Heart right ventricle (tissue), 16 donors: ENCODE measurements at regions of chr2 and their contacts with region 1.

Region 1: GRCh38 chr2:96138179-96139145 is at the start of gene ASTL:
- DNase-seq: peak in 1 of 2 donors; percentile 32
- ATAC-seq: peak in 7 of 8 donors; percentile 35 to 72 (median 62)
- H3K4me3 ChIP-seq: no peak within 1 kb of the TSS
- H3K27ac ChIP-seq: no peak within 1 kb of the TSS
- H3K4me1 ChIP-seq: peaks cover 0 to 8% (median 0%) of the 10 kb centered on the region in 9 donors
- H3K27me3 ChIP-seq: peaks cover 0 to 14% (median 0%) of the 10 kb centered on the region in 7 donors
- CTCF ChIP-seq: peak; percentile 11 to 63 (median 52)
- total RNA-seq, gene ASTL: not detected

Region 2: GRCh38 chr2:96072746-96073145 is 65.7 kb before region 1 on chr2:
- intact Hi-C with region 1: no loop called
- DNase-seq: no peak
- ATAC-seq: peak in 3 of 8 donors; percentile 12 to 34 (median 17)
- H3K4me3 ChIP-seq: no peak overlapping the region
- H3K27ac ChIP-seq: peak overlapping the region in 1 of 10 donors; percentile 56
- H3K4me1 ChIP-seq: peaks cover 0 to 21% (median 0%) of the 10 kb centered on the region in 9 donors
- H3K27me3 ChIP-seq: no peaks in the 10 kb centered on the region
- CTCF ChIP-seq: no peak

Region 3: DNA sequence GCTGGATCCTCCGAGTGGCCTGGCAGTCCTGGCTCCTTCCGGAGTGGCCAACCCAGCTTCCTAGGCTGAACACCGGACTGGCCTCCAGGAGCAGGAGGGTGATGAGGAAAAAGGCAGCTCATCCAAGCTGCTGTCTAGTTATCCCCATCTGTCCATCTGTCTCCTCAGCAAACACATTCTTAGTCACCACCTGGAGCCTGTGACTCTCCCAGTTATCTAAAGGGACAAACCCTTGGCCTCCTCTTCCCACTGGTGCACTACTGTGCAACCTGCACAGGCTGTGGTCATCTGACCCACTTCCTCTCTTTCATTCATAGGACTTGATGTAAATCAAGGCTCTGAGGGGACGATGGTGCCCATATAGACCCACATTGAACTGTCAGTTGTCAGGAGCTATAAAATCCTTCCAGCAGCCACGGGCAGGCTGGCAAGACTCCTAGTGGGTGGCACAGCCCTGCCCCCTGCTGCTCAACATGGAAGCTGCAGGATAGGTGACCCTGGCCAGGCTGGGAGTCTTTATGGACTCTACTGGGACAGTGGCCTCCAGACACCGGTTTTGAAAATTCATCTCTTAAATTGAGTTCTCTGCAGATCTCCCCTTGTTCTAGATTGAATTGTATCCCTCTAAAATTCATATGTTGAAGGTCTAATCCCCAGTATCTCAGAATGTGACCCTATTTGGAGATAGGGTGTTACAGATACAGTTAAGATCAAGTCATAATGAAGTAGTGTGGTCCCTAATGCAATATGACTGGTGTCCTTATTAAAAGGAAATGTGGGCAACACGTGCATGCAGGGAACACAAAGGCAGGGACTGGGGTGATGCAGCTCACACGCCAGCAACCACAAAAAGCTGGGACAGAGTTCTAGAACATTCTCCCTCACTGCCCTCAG is 36.0 kb after region 1 on chr2:
- intact Hi-C with region 1: loop called in 3 of 10 experiments (anchors 2 to 5 kb)
- DNase-seq: peak; percentile 63 to 75
- ATAC-seq: peak; percentile 74 to 89 (median 84)
- H3K4me3 ChIP-seq: no peak overlapping the region
- H3K27ac ChIP-seq: no peak overlapping the region
- H3K4me1 ChIP-seq: peaks cover 0 to 20% (median 0%) of the 10 kb centered on the region in 9 donors
- H3K27me3 ChIP-seq: no peaks in the 10 kb centered on the region
- CTCF ChIP-seq: peak; percentile 73 to 96 (median 92)

Region 4: DNA sequence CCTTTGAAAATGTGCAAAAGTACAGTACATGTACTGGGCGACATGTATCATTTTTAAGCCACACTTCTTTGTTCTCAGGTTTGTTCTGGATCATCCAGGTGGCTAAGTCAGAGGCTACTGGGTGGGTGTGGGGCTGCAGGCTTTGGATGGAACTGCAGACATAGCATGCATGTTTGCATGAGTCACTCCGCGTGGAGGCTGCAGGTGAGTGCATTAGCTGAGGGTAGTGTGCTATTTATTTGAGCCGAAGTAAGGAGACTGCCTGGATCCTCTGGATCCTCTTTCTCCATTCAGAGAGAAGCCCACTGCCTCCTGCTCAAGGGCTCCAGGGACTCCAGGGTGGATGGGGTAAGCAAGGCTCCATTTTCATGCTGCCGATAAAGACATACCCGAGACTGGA is 376.1 kb after region 1 on chr2:
- intact Hi-C with region 1: loop called in 5 of 10 experiments (anchors 5 to 10 kb)
- DNase-seq: no peak
- ATAC-seq: no peak
- H3K4me3 ChIP-seq: no peak overlapping the region
- H3K27ac ChIP-seq: no peak overlapping the region
- H3K4me1 ChIP-seq: peaks cover 0 to 2% (median 0%) of the 10 kb centered on the region in 9 donors
- H3K27me3 ChIP-seq: no peaks in the 10 kb centered on the region
- CTCF ChIP-seq: no peak